IMR-90 (cell line): ENCODE measurements at regions of chr16 and their contacts with region 1.

Region 1: GRCh38 chr16:15843635-15844279 is 13.1 kb downstream of the MYH11 start:
- DNase-seq: peak; percentile 69
- ATAC-seq: peak; percentile 77
- H3K4me3 ChIP-seq: no peak overlapping the region
- H3K27ac ChIP-seq: no peak overlapping the region
- H3K4me1 ChIP-seq: 0 out of 2 replicates have a peak, but pooled peaks cover 2% of the 10 kb centered on the region
- H3K27me3 ChIP-seq: peaks cover 2% of the 10 kb centered on the region
- CTCF ChIP-seq: no peak
- POLR2A ChIP-seq: no peak
- RAD21 ChIP-seq: no peak

Region 2: GRCh38 chr16:16096121-16096857 is 252.5 kb after region 1 on chr16:
- CTCF ChIA-PET with region 1: no interaction called
- POLR2A ChIA-PET with region 1: interaction called, 12 read pairs
- dilution Hi-C with region 1: no loop called
- in situ Hi-C with region 1: no loop called
- intact Hi-C with region 1: no loop called
- DNase-seq: peak; percentile 82
- ATAC-seq: peak; percentile 82
- H3K4me3 ChIP-seq: no peak overlapping the region
- H3K27ac ChIP-seq: peak overlapping the region; percentile 84
- H3K4me1 ChIP-seq: peaks cover 23% of the 10 kb centered on the region
- H3K27me3 ChIP-seq: no peaks in the 10 kb centered on the region
- CTCF ChIP-seq: peak; percentile 44
- POLR2A ChIP-seq: no peak
- RAD21 ChIP-seq: no peak; the same call in 1 of the 2 replicates